Caki2 (cell line): ENCODE measurements at regions of chr20 and their contacts with region 1.

Region 1: GRCh38 chr20:2330090-2330695 is 34.4 kb downstream of the TGM3 start:
- DNase-seq: no peak

Region 2: DNA sequence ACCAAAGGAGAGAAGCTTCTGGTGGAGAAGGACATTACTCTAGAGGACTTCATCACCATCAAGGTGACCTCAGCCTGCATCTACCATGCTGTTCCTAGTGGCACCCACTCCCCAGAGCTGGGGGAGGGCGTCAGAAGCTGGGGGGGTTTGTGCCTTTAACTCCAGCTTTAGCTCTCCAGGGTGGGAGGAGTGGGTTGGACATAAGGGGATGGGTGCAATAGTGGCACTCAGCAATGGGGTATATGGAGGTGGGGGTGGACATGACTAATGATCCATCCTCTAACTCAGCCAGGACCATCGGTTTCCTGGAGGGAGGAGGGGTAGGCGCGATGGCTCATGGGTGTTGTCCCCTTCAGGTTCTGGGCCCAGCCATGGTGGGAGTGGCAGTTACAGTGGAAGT is 100.3 kb after region 1 on chr20:
- in situ Hi-C with region 1: loop called (anchors 10 kb)
- DNase-seq: no peak